ENCODE measurements at regions of chr2 and their contacts with region 1.

Region 1: DNA sequence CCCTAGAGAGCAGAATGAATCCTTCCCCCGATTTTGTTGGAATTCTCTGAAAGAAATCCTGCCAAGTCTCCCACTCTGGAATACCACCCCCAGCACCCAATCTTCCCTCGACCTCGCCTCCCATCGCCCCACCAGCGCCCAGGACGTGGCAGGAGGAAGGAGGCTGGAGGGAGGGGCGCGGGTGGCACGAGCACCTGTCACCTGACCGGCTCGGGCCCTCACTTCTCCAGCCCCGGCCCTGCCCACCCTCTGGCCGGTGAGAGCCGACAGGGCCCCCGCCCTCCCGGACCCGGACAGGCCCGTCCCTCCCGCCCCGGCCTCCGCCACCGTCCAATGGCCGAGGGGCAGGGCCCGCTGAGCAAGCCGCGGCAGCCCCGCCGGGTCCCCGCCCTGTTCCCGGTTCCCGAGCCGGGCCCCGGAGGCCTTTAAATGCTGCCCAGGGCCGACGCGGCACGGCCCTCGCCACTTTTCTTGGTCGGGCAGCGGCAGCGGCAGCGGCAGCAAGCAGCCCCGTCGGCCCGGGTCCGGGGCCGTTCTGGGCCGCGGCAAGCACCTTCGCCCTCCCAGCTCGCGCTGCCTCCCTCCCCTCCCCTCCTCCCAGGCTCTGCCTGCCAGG is at the start of gene LGALSL:
- DNase-seq: peak; percentile 50 to 90
- H3K4me3 ChIP-seq: peak within 1 kb of the TSS; percentile 76 to 93
- H3K27ac ChIP-seq: peak within 1 kb of the TSS; percentile 98 to 99
- H3K4me1 ChIP-seq: peaks cover 5% of the 10 kb centered on the region in 2 donors
- H3K27me3 ChIP-seq: no peaks in the 10 kb centered on the region
- CTCF ChIP-seq: no peak
- total RNA-seq, gene LGALSL: 35.4 TPM

Region 2: GRCh38 chr2:63488118-63488713 is 965.7 kb before region 1 on chr2:
- intact Hi-C with region 1: no loop called
- DNase-seq: no peak
- H3K4me3 ChIP-seq: no peak overlapping the region
- H3K27ac ChIP-seq: no peak overlapping the region
- H3K4me1 ChIP-seq: no peaks in the 10 kb centered on the region
- H3K27me3 ChIP-seq: no peaks in the 10 kb centered on the region
- CTCF ChIP-seq: peak in 1 of 3 experiments; percentile 53

Region 3: DNA sequence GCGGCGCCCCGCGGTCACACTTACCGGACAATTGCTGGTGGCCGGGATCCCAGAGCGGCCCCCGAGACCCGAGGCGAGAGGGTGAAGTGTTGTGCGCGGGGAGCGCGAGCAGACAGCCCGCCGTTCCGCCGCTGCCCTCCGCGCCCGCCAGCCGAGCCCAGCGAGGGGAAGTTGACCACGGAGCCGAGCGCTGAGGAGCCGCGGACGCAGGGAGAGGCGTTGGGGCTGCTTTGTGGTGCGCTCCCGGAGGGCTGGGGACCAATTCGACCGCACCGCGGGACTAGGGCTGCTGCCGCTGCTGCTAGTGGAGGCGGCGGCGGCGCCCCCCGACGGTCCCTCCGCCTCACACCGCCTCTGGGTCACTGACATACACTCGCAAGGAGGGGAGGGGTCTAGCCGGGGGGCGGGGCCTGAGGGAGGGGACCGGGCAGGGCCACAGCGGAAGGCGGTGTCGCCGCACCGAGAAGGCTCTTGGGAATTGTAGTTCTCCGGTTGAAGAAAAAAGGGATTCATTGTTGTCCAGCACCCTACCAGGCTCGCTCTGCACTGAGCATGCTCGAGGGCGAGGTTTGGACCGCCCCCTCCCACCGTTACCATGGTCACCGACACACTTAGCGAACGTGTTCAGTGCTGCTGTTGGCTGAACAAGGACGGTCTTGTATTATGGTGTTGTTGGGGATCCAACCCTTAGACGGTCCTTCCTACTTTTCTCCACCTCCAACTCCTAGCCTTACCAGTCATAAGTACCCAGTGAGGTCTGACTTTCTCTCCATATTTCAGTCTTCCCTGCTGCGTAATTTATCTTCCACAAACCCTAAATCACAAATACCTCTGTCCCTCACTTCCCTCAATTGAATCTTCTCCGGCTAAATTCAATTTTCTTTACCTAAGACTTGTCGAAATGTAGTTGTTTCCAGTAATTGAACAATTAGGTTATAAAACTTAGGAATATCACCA is 309.5 kb before region 1 on chr2 and contains the start of gene PELI1:
- intact Hi-C with region 1: loop called (anchors 10 kb)
- DNase-seq: peak; percentile 91 to 97
- H3K4me3 ChIP-seq: peak within 1 kb of the TSS; percentile 94 to 98
- H3K27ac ChIP-seq: peak within 1 kb of the TSS; percentile 97 to 99
- H3K4me1 ChIP-seq: peaks cover 0 to 10% of the 10 kb centered on the region in 2 donors
- H3K27me3 ChIP-seq: no peaks in the 10 kb centered on the region
- CTCF ChIP-seq: peak; percentile 26 to 44 (median 31)
- total RNA-seq, gene PELI1: 140 TPM

Region 4: DNA sequence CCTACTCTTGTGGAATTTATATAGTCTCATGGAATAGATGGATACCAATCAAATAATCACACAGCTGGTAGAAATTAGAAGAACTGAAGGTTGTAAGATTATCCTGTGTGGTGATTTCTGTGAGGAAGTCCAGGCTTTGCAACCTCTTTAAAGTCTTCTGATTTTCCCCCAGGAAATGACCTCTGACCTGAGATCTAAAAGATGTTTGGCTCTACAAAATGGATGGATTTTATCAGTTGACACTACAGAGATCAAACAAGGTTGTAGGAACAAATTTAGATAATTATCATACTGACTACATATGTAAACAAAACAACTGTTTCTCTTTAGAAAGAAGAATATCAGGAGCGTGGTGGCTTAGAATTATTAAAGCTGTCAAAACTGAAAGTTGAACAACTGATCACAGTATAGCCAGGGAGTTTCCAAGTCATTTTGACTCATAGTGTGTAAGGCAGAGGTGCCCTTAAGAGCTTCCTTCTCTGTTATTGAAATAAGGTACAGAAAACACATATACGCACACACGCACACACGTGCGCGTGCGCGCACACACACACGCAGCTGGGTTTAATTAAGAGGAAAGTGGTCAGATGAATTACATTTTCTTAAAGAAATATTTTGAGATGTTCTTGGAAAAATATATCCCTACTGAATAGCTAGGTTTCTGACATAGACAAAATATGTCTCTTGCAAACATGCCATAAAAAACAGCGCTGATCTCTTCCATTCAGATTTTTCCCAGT is 274.1 kb before region 1 on chr2:
- intact Hi-C with region 1: no loop called
- DNase-seq: no peak
- H3K4me3 ChIP-seq: no peak overlapping the region
- H3K27ac ChIP-seq: no peak overlapping the region
- H3K4me1 ChIP-seq: no peaks in the 10 kb centered on the region
- H3K27me3 ChIP-seq: no peaks in the 10 kb centered on the region
- CTCF ChIP-seq: no peak

Region 5: GRCh38 chr2:64404002-64404731 is 49.7 kb before region 1 on chr2:
- intact Hi-C with region 1: loop called (anchors 1 kb)
- DNase-seq: peak; percentile 38 to 92
- H3K4me3 ChIP-seq: peak overlapping the region in 1 of 2 donors; percentile 32
- H3K27ac ChIP-seq: peak overlapping the region; percentile 91
- H3K4me1 ChIP-seq: peaks cover 18% of the 10 kb centered on the region in 2 donors
- H3K27me3 ChIP-seq: no peaks in the 10 kb centered on the region
- CTCF ChIP-seq: no peak

Region 6: DNA sequence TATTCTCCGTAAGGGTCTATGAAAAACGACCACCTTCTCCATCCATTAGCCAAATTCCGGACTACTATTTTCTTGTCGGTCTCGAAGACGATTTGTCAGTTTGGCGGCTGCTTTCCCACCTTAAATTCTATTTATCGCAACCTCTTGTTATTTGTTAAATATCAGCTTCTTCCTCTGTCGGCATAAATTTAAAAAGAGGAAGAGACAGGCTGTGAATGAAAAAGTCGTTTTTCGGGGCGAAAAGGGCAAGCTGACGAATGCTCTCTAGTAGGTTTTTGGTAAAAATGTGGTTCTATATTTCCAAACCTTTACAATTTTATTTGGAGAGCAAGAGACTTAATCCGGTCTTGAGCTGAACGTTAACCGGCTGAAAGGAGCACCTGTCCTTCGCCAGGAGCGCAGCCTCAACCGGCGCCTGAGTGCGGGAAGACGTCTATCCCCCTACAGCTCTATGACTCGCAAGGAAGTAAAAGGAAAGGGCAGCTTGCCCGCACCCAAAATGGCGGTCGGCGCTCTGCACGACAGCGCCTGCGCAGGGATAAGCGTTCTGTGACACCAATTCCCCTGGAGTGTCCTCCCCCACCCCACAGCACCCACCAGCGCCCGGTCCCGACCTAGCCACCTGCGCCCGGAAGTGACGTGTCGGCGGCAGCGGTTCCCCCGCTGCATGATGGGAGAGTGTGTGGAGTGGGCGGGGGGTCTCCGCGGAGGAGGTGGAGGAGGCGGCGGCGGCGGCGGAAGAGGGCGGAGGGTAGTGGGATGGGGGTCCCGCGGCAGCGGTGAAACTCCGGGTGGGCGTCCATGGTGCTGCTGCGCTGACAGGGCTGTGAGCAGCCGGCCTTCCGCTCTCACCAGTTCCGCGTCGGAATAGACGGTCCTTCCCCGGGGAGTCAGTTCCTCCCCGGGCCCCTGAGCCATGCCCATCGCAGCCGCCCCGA is 70.1 kb after region 1 on chr2 and contains the start of gene AFTPH:
- intact Hi-C with region 1: loop called (anchors 1 kb)
- DNase-seq: peak; percentile 98 to 99
- H3K4me3 ChIP-seq: peak within 1 kb of the TSS; percentile 64 to 99
- H3K27ac ChIP-seq: peak within 1 kb of the TSS; percentile 93 to 98
- H3K4me1 ChIP-seq: peaks cover 0 to 2% of the 10 kb centered on the region in 2 donors
- H3K27me3 ChIP-seq: no peaks in the 10 kb centered on the region
- CTCF ChIP-seq: no peak
- total RNA-seq, gene AFTPH: 58.0 TPM

Region 7: DNA sequence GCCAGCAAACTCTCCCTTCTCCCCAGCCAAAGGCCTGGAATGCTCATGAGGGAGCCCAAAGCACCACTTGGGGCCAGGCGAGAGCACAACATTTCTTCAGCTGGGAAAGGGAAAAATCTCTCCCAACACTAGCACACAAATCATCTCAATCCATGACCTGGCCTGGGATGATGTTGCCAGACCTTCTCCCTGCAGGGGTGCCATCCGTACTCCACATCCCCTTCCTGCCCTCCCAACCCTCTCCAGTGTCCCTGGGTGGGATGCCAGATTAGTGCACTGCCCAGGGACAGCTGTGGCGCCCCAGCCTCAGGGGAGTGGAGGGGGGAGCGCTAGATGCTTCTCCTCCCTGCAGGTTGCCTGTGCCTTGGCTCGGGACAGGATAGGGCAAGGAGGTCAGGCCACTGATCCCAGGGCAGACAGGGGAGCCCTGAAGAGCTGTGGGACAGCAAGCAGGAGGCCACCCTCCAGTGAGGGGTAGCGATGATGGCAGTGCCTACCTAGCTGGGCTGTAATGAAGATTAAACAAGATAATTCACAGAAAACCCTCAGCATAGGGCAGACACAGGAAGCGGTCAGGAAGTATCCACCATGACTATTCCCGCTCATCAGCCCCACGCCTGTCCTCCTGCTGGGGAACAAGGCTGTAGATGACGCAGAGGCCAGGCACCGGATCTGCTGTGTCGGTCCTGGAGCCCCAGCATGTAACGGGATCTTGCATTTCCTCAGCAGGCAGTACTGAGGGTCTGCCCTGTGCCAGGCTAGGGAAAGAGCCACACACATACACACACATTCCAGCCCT is 168.8 kb after region 1 on chr2:
- intact Hi-C with region 1: no loop called
- DNase-seq: no peak
- H3K4me3 ChIP-seq: no peak overlapping the region
- H3K27ac ChIP-seq: no peak overlapping the region
- H3K4me1 ChIP-seq: no peaks in the 10 kb centered on the region
- H3K27me3 ChIP-seq: no peaks in the 10 kb centered on the region
- CTCF ChIP-seq: peak in 1 of 3 experiments; percentile 23

Measured in ascending aorta (tissue), 2 donors.